RWPE1 (cell line): ENCODE measurements at regions of chr5 and their contacts with region 1.

Region 1: GRCh38 chr5:142548739-142549275 is 137.1 kb downstream of the FGF1 start:
- DNase-seq: peak; percentile 93
- H3K27ac ChIP-seq: no peak overlapping the region
- CTCF ChIP-seq: peak; percentile 94

Region 2: GRCh38 chr5:142151436-142152383 is 397.1 kb before region 1 on chr5:
- CTCF ChIA-PET with region 1: interaction called, 19 read pairs
- POLR2A ChIA-PET with region 1: no interaction called
- DNase-seq: peak; percentile 62
- H3K27ac ChIP-seq: no peak overlapping the region
- CTCF ChIP-seq: peak; percentile 94